Vagina (tissue), 2 donors: ENCODE measurements at regions of chr5 and their contacts with region 1.

Region 1: GRCh38 chr5:152505442-152506042 is 100.5 kb upstream of the NMUR2 start:
- DNase-seq: no peak
- H3K4me3 ChIP-seq: no peak overlapping the region
- H3K27ac ChIP-seq: no peak overlapping the region
- H3K4me1 ChIP-seq: no peaks in the 10 kb centered on the region
- H3K27me3 ChIP-seq: no peaks in the 10 kb centered on the region
- CTCF ChIP-seq: peak; percentile 20 to 37 (median 28)
- POLR2A ChIP-seq: no peak

Region 2: GRCh38 chr5:151825445-151825844 is 680.1 kb before region 1 on chr5:
- intact Hi-C with region 1: loop called (anchors 5 kb)
- DNase-seq: no peak
- H3K4me3 ChIP-seq: no peak overlapping the region
- H3K27ac ChIP-seq: no peak overlapping the region
- H3K4me1 ChIP-seq: no peaks in the 10 kb centered on the region
- H3K27me3 ChIP-seq: no peaks in the 10 kb centered on the region
- CTCF ChIP-seq: peak; percentile 52 to 72 (median 53)
- POLR2A ChIP-seq: no peak

Region 3: DNA sequence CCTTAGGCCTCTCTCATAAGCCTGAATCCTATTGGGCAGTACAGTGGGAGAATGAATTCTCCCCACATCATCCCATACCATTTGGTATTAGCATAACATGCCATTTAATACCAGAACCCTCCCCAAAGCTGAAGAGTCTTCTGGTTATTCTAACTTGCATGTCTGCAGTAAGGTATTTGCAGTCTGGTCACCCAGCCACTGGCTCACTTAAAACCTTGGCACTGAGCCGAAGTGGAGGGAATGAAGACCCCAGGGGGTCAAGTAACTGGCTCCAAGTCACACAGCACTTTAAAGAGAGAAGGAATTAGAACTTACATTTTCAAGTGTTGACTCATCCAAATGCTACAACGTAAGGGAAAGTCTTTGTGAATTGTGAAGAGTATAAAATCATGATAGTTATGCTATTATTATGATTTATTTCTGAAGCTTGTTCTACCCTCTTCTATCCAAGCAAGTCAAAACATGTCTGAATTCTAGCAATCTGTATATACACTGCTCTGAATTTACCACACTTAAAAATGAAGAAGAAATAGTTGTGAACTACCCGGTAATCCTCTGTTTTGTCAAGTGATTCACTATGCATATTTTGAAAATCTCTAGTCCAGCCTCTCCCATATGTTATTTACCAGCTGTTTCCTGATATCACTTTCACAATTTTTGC is 609.4 kb before region 1 on chr5:
- intact Hi-C with region 1: no loop called
- DNase-seq: no peak
- H3K4me3 ChIP-seq: no peak overlapping the region
- H3K27ac ChIP-seq: no peak overlapping the region
- H3K4me1 ChIP-seq: no peaks in the 10 kb centered on the region
- H3K27me3 ChIP-seq: no peaks in the 10 kb centered on the region
- CTCF ChIP-seq: no peak
- POLR2A ChIP-seq: no peak

Region 4: GRCh38 chr5:151924564-151925301 is 580.8 kb before region 1 on chr5 and contains the start of gene GLRA1:
- intact Hi-C with region 1: no loop called
- DNase-seq: no peak
- H3K4me3 ChIP-seq: no peak within 1 kb of the TSS
- H3K27ac ChIP-seq: no peak within 1 kb of the TSS
- H3K4me1 ChIP-seq: no peaks in the 10 kb centered on the region
- H3K27me3 ChIP-seq: no peaks in the 10 kb centered on the region
- CTCF ChIP-seq: no peak
- POLR2A ChIP-seq: no peak
- total RNA-seq, gene GLRA1: not detected

Region 5: GRCh38 chr5:153159611-153160010 is 654.1 kb after region 1 on chr5:
- intact Hi-C with region 1: no loop called
- DNase-seq: no peak
- H3K4me3 ChIP-seq: no peak overlapping the region
- H3K27ac ChIP-seq: no peak overlapping the region
- H3K4me1 ChIP-seq: no peaks in the 10 kb centered on the region
- H3K27me3 ChIP-seq: no peaks in the 10 kb centered on the region
- CTCF ChIP-seq: no peak
- POLR2A ChIP-seq: no peak

Region 6: DNA sequence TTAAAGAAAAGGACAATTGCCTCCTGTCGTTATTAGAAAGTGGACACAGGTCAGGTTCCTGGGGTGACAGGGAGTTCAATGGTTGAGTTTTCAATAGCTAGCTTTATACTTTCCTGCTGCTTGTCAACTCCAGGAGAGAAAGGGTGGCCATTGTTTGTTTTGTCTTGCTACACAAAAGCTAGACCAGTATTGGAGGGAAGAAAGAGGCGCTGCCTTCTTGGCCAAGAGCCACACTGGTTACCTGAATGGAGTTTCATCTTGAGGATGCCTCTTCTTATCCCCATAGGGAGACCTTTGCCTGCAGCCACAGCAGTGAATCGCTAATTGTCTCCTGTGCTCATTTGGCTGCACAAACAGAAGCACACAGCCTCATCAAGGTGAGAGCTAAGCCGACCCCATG is 705.5 kb after region 1 on chr5:
- intact Hi-C with region 1: no loop called
- DNase-seq: no peak
- H3K4me3 ChIP-seq: no peak overlapping the region
- H3K27ac ChIP-seq: no peak overlapping the region
- H3K4me1 ChIP-seq: no peaks in the 10 kb centered on the region
- H3K27me3 ChIP-seq: no peaks in the 10 kb centered on the region
- CTCF ChIP-seq: no peak
- POLR2A ChIP-seq: no peak